Natural killer cell (primary cell): ENCODE measurements at regions of chr15 and their contacts with region 1.

Region 1: DNA sequence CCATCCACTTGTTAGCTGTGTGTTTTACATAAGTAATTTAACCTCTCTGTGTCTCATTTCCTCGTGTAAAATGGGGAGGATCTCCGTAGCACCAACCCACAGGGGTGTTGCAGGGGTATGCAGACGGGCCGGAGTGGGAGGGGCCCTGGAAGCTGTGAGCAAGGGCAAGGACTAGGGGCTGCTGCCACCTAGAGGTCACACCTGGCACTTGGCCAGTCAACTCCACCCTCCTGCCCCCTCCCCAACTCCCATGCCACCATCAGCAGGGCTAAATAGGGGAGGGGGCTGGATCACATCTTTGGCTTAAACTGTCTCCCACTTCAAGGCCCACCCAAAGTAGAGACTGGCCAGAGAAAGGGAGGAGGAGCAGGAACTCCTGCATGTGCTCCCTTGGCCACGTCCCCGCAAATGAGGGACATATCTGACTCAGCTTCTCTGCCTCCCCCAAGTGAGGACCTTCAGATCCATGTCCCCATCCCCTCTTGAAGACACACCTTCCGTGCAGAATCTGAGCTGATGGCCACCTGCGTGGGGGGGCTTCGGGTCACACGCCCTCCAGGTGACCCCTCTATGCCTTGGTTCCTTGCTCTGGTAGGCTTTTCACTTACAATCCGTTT is 2.6 kb downstream of the CCDC9B start:
- DNase-seq: peak; percentile 67 to 89
- ATAC-seq: peak; percentile 84 to 96 (median 94)
- H3K4me3 ChIP-seq: no peak overlapping the region
- H3K4me3 Mint-ChIP-seq: no peak overlapping the region
- H3K27ac ChIP-seq: no peak overlapping the region
- H3K27ac Mint-ChIP-seq: no peak overlapping the region
- H3K4me1 ChIP-seq: peaks cover 38% of the 10 kb centered on the region
- H3K4me1 Mint-ChIP-seq: peaks cover 0 to 19% of the 10 kb centered on the region in 2 donors
- H3K27me3 ChIP-seq: no peaks in the 10 kb centered on the region
- H3K27me3 Mint-ChIP-seq: peaks cover 0 to 2% of the 10 kb centered on the region in 2 donors
- CTCF ChIP-seq: peak; percentile 91

Region 2: GRCh38 chr15:40217159-40217824 is 120.9 kb before region 1 on chr15:
- intact Hi-C with region 1: loop called (anchors 10 kb)
- DNase-seq: peak in 1 of 2 donors; percentile 87
- ATAC-seq: peak; percentile 93 to 99 (median 99)
- H3K4me3 ChIP-seq: no peak overlapping the region
- H3K4me3 Mint-ChIP-seq: no peak overlapping the region
- H3K27ac ChIP-seq: no peak overlapping the region
- H3K27ac Mint-ChIP-seq: no peak overlapping the region
- H3K4me1 ChIP-seq: no peaks in the 10 kb centered on the region
- H3K4me1 Mint-ChIP-seq: peaks cover 0 to 7% of the 10 kb centered on the region in 2 donors
- H3K27me3 ChIP-seq: no peaks in the 10 kb centered on the region
- H3K27me3 Mint-ChIP-seq: no peaks in the 10 kb centered on the region
- CTCF ChIP-seq: peak; percentile 93

Region 3: GRCh38 chr15:40405501-40406381 is 67.6 kb after region 1 on chr15 and contains the start of gene IVD:
- intact Hi-C with region 1: no loop called
- DNase-seq: peak; percentile 85 to 93
- ATAC-seq: peak; percentile 99 to 100 (median 99)
- H3K4me3 ChIP-seq: peak within 1 kb of the TSS; percentile 73
- H3K4me3 Mint-ChIP-seq: peak within 1 kb of the TSS; percentile 93
- H3K27ac ChIP-seq: peak within 1 kb of the TSS; percentile 54
- H3K27ac Mint-ChIP-seq: peak within 1 kb of the TSS; percentile 73 to 87
- H3K4me1 ChIP-seq: peaks cover 20% of the 10 kb centered on the region
- H3K4me1 Mint-ChIP-seq: peaks cover 27 to 28% of the 10 kb centered on the region in 2 donors
- H3K27me3 ChIP-seq: no peaks in the 10 kb centered on the region
- H3K27me3 Mint-ChIP-seq: no peaks in the 10 kb centered on the region
- CTCF ChIP-seq: no peak
- total RNA-seq, gene IVD: 56.2 to 76.8 (median 67.3) TPM